Activated CD4-positive, alpha-beta memory T cell treated with anti-CD3 and anti-CD28 coated beads, Interleukin-2, amount 10 ng/mL, durations not matched to agents 7 days and 5 days (primary cell): ENCODE measurements at regions of chr1 and their contacts with region 1.

Region 1: GRCh38 chr1:226407497-226408284 is at the start of gene PARP1:
- DNase-seq: peak; percentile 92
- H3K4me3 Mint-ChIP-seq: peak within 1 kb of the TSS; percentile 85
- H3K27ac Mint-ChIP-seq: peak within 1 kb of the TSS; percentile 89
- H3K4me1 Mint-ChIP-seq: peaks cover 35% of the 10 kb centered on the region
- H3K27me3 Mint-ChIP-seq: peaks cover 2% of the 10 kb centered on the region
- total RNA-seq, gene PARP1: 191 to 194 TPM

Region 2: DNA sequence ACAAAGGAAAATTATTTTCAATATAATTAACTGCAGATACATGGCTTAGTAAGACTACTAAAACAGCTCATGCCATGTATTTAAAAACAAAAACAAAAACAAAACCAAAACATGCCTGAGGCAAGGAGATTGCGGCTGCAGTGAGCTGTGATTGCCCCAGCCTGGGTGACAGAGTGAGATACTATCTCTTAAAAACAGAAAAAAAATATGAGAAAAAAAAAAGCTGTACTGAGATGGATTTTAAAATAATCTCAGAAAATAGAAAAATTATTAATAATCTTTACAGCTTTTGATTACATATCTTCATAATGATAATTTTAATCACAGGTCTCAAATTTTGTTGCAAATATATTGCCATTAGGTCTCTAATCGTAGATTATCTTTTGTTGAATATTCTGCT is 74.7 kb before region 1 on chr1:
- CTCF ChIA-PET with region 1: interaction called, 10 read pairs
- POLR2A ChIA-PET with region 1: interaction called, 6 read pairs
- DNase-seq: peak; percentile 21
- H3K4me3 Mint-ChIP-seq: peak overlapping the region; percentile 3
- H3K27ac Mint-ChIP-seq: no peak overlapping the region
- H3K4me1 Mint-ChIP-seq: peaks cover 20% of the 10 kb centered on the region
- H3K27me3 Mint-ChIP-seq: no peaks in the 10 kb centered on the region

Region 3: GRCh38 chr1:226397011-226397926 is 10.4 kb before region 1 on chr1:
- CTCF ChIA-PET with region 1: interaction called, 18 read pairs
- POLR2A ChIA-PET with region 1: interaction called, 29 read pairs
- DNase-seq: no peak
- H3K4me3 Mint-ChIP-seq: no peak overlapping the region
- H3K27ac Mint-ChIP-seq: no peak overlapping the region
- H3K4me1 Mint-ChIP-seq: peaks cover 15% of the 10 kb centered on the region
- H3K27me3 Mint-ChIP-seq: no peaks in the 10 kb centered on the region

Region 4: GRCh38 chr1:226424228-226425003 is 16.7 kb after region 1 on chr1:
- CTCF ChIA-PET with region 1: interaction called, 69 read pairs
- POLR2A ChIA-PET with region 1: interaction called, 35 read pairs
- DNase-seq: no peak
- H3K4me3 Mint-ChIP-seq: no peak overlapping the region
- H3K27ac Mint-ChIP-seq: no peak overlapping the region
- H3K4me1 Mint-ChIP-seq: peaks cover 10% of the 10 kb centered on the region
- H3K27me3 Mint-ChIP-seq: peaks cover 3% of the 10 kb centered on the region

Region 5: DNA sequence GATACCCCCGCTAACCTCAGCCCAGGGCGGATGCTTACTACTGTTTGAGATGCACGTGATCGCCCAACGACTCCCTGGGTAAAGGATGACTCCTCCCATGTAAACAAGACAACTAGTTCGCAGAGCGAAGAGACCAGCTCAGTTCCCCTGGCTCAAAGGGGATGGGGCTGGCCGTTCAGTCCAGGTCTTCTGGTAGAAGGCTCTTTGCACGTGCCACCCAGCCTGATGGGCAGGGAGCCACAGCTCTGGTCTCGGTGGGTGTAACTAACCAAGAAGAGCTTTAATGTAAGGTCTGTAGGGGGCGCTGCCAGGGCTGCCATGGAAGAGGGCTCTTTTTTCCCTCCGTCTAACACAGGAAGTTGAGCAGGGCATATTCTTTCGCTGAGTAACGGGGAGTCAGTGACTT is 49.6 kb after region 1 on chr1:
- CTCF ChIA-PET with region 1: interaction called, 15 read pairs
- POLR2A ChIA-PET with region 1: interaction called, 7 read pairs
- DNase-seq: peak; percentile 50
- H3K4me3 Mint-ChIP-seq: peak overlapping the region; percentile 33
- H3K27ac Mint-ChIP-seq: peak overlapping the region; percentile 52
- H3K4me1 Mint-ChIP-seq: peaks cover 11% of the 10 kb centered on the region
- H3K27me3 Mint-ChIP-seq: peaks cover 8% of the 10 kb centered on the region